A673 (cell line): ENCODE measurements at regions of chr1 and their contacts with region 1.

Region 1: GRCh38 chr1:244835276-244836134 is at the start of gene COX20:
- DNase-seq: peak; percentile 95
- H3K4me3 ChIP-seq: peak within 1 kb of the TSS; percentile 72
- H3K27ac ChIP-seq: peak within 1 kb of the TSS; percentile 97
- H3K4me1 ChIP-seq: peaks cover 23% of the 10 kb centered on the region
- H3K27me3 ChIP-seq: no peaks in the 10 kb centered on the region
- CTCF ChIP-seq: no peak
- total RNA-seq, gene COX20: 48.0 and 59.0 TPM in 2 replicates

Region 2: GRCh38 chr1:244536316-244536715 is 299.2 kb before region 1 on chr1:
- CTCF ChIA-PET with region 1: no interaction called
- POLR2A ChIA-PET with region 1: no interaction called
- intact Hi-C with region 1: no loop called
- DNase-seq: no peak
- H3K4me3 ChIP-seq: no peak overlapping the region
- H3K27ac ChIP-seq: no peak overlapping the region
- H3K4me1 ChIP-seq: no peaks in the 10 kb centered on the region
- H3K27me3 ChIP-seq: no peaks in the 10 kb centered on the region
- CTCF ChIP-seq: no peak

Region 3: DNA sequence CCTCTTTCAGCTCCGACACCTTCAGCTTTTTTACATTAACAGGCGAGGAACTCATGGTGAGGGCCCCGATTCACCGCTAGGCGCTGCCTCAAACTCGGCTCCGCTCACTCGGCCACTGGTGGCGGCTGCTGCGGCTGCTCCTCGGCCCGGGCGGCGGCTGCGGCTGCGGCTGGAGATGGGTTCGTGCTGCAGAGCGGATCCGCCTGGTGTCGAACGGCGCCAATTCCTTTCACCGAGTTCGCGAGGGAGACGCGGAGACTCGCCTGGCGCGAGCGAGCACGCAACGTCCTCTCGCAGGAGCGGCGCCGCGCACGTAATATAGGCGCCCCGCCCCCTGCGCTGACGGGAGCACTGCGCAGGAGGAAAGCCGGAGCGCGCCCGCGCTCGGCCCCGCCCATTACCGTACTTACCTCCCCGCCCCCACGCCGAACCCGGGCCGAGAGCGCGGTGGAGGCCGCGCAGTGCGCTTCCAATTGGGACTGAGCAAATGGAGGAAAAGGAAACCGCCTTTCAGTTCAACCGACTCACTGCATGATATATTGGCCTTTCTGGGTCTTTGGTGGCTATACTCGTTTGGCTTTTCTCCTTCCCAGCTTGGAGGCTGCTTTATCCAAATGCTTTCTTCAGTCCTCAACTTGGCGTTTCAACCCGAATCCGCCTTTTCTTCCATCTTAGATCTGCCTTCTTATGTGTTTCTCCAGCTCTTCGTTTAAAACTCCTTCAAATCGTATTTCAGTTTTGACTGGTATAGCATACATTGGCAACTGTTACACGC is 28.9 kb after region 1 on chr1 and contains the start of gene HNRNPU:
- CTCF ChIA-PET with region 1: no interaction called
- POLR2A ChIA-PET with region 1: interaction called, 13 read pairs
- intact Hi-C with region 1: loop called (anchors 2 kb)
- DNase-seq: peak; percentile 98
- H3K4me3 ChIP-seq: peak within 1 kb of the TSS; percentile 82
- H3K27ac ChIP-seq: peak within 1 kb of the TSS; percentile 99
- H3K4me1 ChIP-seq: peaks cover 21% of the 10 kb centered on the region
- H3K27me3 ChIP-seq: no peaks in the 10 kb centered on the region
- CTCF ChIP-seq: peak; percentile 36; the same call in 1 of the 2 replicates
- total RNA-seq, gene HNRNPU: 720 and 746 TPM in 2 replicates